ENCODE measurements at regions of chr2 and their contacts with region 1.

Region 1: GRCh38 chr2:181891258-181891965 is at the start of gene ITPRID2:
- DNase-seq: peak; percentile 90 to 94 (median 92)
- ATAC-seq: peak; percentile 94
- H3K4me3 ChIP-seq: peak within 1 kb of the TSS; percentile 43 to 84
- H3K27ac ChIP-seq: peak within 1 kb of the TSS; percentile 93 to 100 (median 98)
- H3K4me1 ChIP-seq: peaks cover 32% of the 10 kb centered on the region
- H3K27me3 ChIP-seq: no peaks in the 10 kb centered on the region
- CTCF ChIP-seq: peak in 3 of 7 experiments; percentile 51 to 90 (median 81)
- POLR2A ChIP-seq: no peak
- total RNA-seq, gene ITPRID2: 224 to 274 TPM

Region 2: GRCh38 chr2:181742922-181743722 is 148.3 kb before region 1 on chr2:
- intact Hi-C with region 1: loop called (anchors 10 kb)
- DNase-seq: peak; percentile 58 to 74 (median 68)
- ATAC-seq: peak; percentile 84
- H3K4me3 ChIP-seq: no peak overlapping the region
- H3K27ac ChIP-seq: peak overlapping the region in 3 of 4 donors; percentile 21 to 70 (median 41)
- H3K4me1 ChIP-seq: peaks cover 27% of the 10 kb centered on the region
- H3K27me3 ChIP-seq: no peaks in the 10 kb centered on the region
- CTCF ChIP-seq: peak; percentile 40 to 94 (median 89)
- POLR2A ChIP-seq: no peak

Region 3: GRCh38 chr2:181970160-181970794 is 78.9 kb after region 1 on chr2:
- intact Hi-C with region 1: no loop called
- DNase-seq: peak; percentile 36 to 76 (median 68)
- ATAC-seq: peak; percentile 89
- H3K4me3 ChIP-seq: no peak overlapping the region
- H3K27ac ChIP-seq: peak overlapping the region in 1 of 4 donors; percentile 14
- H3K4me1 ChIP-seq: peaks cover 14% of the 10 kb centered on the region
- H3K27me3 ChIP-seq: no peaks in the 10 kb centered on the region
- CTCF ChIP-seq: no peak
- POLR2A ChIP-seq: no peak